Activated CD8-positive, alpha-beta T cell treated with anti-CD3 and anti-CD28 coated beads, Interleukin-2, amount 10 ng/mL, durations not matched to agents 7 days and 5 days (primary cell): ENCODE measurements at regions of chr1 and their contacts with region 1.

Region 1: GRCh38 chr1:209747580-209748262 is 8.1 kb upstream of the TRAF3IP3 start:
- DNase-seq: peak; percentile 89
- ATAC-seq: peak; percentile 84
- H3K4me3 Mint-ChIP-seq: peak overlapping the region; percentile 66
- H3K27ac Mint-ChIP-seq: peak overlapping the region; percentile 89
- H3K4me1 Mint-ChIP-seq: peaks cover 60% of the 10 kb centered on the region
- H3K27me3 Mint-ChIP-seq: no peaks in the 10 kb centered on the region

Region 2: DNA sequence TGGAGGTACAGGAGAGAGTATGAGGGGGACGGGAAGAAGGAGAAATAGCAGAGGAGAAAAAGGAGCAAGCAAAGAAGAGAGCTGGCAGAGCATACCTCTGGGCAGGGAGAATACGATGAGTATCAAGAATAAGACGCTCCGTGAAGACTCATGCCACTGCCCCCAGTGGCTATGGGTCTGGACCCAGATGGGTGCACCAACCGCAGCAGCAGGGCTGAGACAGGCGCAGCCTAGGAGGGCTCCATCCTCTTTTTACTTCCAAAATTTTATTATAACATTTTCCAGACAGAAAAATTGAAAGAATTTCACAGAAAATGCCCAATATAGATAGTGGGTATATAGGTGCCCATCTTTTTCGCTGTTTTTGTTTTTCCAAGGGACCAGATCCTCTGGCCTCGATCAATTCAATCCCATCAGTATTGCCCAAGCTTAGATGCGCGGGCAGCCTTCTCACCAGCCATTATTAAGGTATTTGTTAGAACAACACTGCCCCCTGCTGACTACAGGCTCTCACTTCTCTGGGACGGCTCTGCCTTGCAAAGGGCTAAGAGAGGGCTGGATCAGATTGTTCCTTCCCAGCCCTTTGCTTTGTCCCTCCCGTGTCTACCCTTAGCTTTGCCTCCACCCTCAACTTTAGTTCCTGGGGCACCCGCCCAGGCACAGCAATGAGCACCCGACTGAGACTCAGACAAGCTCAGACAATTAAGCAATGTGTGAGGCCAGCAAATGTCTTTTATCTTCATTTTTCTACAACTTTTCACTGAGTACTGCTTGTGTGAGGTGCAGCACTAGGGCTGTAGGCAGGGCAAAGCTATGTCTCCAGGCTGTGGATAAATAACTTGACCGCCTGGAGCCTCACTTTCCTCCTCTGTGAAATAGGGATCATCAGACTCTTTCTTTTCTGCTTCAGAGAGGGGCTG is 181.7 kb before region 1 on chr1:
- CTCF ChIA-PET with region 1: interaction called, 24 read pairs
- POLR2A ChIA-PET with region 1: no interaction called
- DNase-seq: peak; percentile 85
- ATAC-seq: peak; percentile 92
- H3K4me3 Mint-ChIP-seq: no peak overlapping the region
- H3K27ac Mint-ChIP-seq: no peak overlapping the region
- H3K4me1 Mint-ChIP-seq: peaks cover 9% of the 10 kb centered on the region
- H3K27me3 Mint-ChIP-seq: peaks cover 29% of the 10 kb centered on the region

Region 3: DNA sequence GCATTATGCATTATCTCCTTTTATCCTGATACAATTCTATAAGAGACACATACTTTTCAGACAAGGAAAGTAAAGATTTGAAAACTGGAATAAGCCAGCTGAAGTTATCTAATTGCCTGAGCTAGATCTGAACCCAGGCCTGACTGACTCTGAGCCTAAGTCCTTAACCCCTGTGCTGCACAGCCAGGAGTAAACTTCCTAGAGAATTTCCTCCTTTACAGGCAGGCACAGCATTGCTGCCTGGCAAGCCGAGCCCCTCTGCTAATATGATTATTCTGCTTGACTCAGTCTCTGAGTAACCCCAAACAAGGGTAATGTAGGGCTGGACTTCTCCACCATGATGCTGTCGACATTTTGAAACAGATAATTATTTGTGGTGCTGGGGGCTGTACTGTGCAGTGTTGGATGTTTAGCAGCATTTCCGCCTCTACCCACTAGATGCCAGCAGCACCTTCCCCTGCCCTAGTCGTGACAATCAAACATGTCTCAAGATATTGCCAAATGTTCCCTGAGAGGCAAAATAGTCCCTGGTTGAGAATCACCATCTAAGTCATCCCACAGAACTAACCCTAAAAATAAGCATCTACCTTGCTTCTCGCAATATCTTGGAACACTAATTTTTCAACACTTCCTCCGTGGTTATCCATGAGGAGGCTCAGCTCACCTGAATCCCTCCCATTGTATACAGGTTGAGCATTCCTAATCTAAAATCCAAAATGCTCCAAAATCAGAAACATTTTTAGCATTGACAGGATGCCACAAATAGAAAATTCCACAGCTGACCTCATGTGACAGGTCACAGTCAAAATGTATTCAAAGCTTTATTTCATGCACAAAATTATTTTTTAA is 145.7 kb before region 1 on chr1:
- CTCF ChIA-PET with region 1: interaction called, 12 read pairs
- POLR2A ChIA-PET with region 1: no interaction called
- DNase-seq: peak; percentile 53
- ATAC-seq: peak; percentile 76
- H3K4me3 Mint-ChIP-seq: no peak overlapping the region
- H3K27ac Mint-ChIP-seq: no peak overlapping the region
- H3K4me1 Mint-ChIP-seq: peaks cover 6% of the 10 kb centered on the region
- H3K27me3 Mint-ChIP-seq: peaks cover 35% of the 10 kb centered on the region

Region 4: DNA sequence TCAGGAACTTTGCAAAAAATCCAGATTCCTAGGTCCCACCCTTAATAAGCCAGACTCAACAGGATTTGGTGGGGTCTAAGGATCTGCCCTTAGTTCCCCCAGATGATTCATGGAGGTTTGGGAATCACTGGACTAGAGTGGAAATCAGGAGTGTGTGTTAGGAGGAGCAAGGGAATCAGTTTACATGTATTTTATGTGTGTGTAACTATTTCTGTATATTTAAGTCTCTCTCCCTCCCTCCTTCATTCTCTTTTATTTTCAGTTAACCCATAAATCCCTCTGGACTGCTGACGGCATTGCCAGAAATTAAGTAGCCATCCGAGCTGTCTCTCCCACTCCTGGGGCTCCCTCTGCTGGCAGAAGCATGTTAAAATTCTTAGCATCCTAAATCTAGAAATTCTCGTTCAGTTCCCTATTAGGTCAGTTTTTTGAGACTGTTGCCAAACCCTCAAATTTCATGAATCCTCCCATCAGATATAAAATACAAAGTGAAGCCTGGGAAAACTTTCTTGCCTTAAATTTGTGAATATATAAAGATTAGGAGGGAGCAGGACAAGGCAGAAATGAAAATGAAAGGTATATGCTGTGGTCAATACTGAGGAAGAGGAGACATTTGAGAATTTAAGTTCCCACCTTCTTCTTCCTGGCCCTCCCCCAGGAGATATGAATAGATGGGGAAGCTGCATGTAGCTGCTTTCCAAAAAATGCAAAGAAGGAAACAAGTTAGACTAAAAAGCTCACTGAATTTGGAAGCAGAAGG is 54.8 kb before region 1 on chr1:
- CTCF ChIA-PET with region 1: interaction called, 46 read pairs
- POLR2A ChIA-PET with region 1: no interaction called
- DNase-seq: peak; percentile 81
- ATAC-seq: peak; percentile 68
- H3K4me3 Mint-ChIP-seq: peak overlapping the region; percentile 45
- H3K27ac Mint-ChIP-seq: no peak overlapping the region
- H3K4me1 Mint-ChIP-seq: peaks cover 28% of the 10 kb centered on the region
- H3K27me3 Mint-ChIP-seq: peaks cover 3% of the 10 kb centered on the region

Region 5: GRCh38 chr1:209715314-209715713 is 32.4 kb before region 1 on chr1:
- CTCF ChIA-PET with region 1: no interaction called
- POLR2A ChIA-PET with region 1: no interaction called
- DNase-seq: no peak
- ATAC-seq: no peak
- H3K4me3 Mint-ChIP-seq: no peak overlapping the region
- H3K27ac Mint-ChIP-seq: no peak overlapping the region
- H3K4me1 Mint-ChIP-seq: peaks cover 3% of the 10 kb centered on the region
- H3K27me3 Mint-ChIP-seq: no peaks in the 10 kb centered on the region

Region 6: DNA sequence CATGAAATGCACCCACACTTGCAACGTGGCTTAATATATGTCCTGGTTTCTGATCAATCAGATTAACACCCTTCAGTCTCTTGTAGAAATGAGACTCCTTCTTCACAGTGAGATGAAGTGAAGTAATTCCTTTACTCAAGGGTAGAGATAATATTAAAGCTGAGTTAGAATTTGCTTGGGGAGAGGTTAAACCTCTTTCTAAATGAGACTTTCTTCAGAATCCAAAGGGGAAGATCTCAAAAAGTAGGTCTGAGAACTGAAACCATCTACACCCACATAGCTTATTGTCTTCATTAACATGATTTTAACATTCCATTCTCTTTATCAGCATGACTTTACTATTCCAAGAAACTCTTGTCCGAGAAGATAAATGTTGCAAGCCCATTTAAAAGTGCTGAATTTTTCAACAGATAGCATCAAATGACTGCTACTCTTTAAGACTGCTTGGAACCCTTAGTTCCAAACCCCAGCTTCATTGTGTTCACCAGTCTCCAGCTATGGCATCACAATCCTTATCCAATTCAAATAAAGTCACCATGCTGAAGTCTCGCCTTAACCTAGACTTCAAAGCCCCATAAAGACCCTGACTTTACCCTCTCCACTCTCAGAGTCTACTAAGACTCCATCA is 11.1 kb before region 1 on chr1:
- CTCF ChIA-PET with region 1: interaction called, 16 read pairs
- POLR2A ChIA-PET with region 1: no interaction called
- DNase-seq: no peak
- ATAC-seq: no peak
- H3K4me3 Mint-ChIP-seq: no peak overlapping the region
- H3K27ac Mint-ChIP-seq: no peak overlapping the region
- H3K4me1 Mint-ChIP-seq: peaks cover 3% of the 10 kb centered on the region
- H3K27me3 Mint-ChIP-seq: no peaks in the 10 kb centered on the region

Region 7: DNA sequence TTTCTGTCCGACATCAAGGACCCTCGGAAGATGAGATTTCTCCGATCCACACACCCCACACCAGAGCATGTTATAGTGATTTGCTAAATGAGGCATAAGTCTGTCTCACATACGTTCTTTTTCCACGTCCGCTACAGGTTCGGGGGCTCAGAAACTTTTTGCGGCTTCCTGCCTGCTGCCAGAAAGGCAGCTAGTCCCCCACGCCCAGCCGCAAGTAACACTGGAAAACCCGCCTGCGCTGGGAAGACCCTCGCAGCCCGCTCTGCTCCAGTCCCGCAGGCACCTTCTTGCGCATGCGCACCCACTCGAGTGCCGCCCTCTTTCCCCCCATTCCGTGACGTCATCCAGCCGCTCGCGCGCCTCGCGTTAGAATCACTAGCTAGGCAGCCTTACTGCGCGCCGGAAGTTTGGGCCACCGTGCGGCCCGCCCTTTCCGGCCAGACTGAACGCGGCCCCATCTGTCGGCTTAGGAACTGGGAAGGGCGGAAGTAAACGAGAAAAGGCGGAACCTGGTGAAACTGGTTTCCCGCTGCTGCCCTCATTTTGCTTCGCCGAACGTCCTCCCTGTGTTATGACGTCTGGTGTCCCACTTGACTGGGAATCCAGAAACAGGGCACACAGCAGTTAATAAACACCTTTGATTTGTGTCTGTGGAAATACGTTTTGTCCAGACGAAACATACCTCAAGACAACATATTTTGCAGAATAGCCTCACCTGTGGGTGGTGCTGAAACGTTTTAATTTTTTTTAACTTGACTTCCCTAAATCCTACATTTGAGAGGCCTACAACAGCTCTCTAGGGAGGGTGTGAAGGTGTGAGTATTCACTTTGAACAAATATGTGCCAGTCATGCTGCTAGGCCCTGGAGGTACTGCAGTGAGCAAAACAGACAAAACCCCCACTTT is 36.8 kb after region 1 on chr1 and contains the start of gene C1orf74:
- CTCF ChIA-PET with region 1: interaction called, 10 read pairs
- POLR2A ChIA-PET with region 1: interaction called, 9 read pairs
- DNase-seq: peak; percentile 99
- ATAC-seq: peak; percentile 99
- H3K4me3 Mint-ChIP-seq: peak within 1 kb of the TSS; percentile 94
- H3K27ac Mint-ChIP-seq: peak within 1 kb of the TSS; percentile 99
- H3K4me1 Mint-ChIP-seq: peaks cover 50% of the 10 kb centered on the region
- H3K27me3 Mint-ChIP-seq: no peaks in the 10 kb centered on the region
- total RNA-seq, gene C1orf74: 2.5 to 2.6 TPM